Activated T-helper 2 cell treated with anti-CD3 and anti-CD28 coated beads, Interferon-gamma antibody, Interleukin-2, Interleukin-4, amounts not matched to agents 10 μg/mL and 5 μg/mL and 100 μg/mL, durations not matched to agents 14 hours and 24 hours and 36 hours (primary cell): ENCODE measurements at regions of chr1 and their contacts with region 1.

Region 1: GRCh38 chr1:116826818-116827606 is 72.8 kb downstream of the CD2 start:
- DNase-seq: peak; percentile 73
- H3K4me3 Mint-ChIP-seq: peak overlapping the region; percentile 71
- H3K27ac Mint-ChIP-seq: peak overlapping the region; percentile 97
- H3K4me1 Mint-ChIP-seq: peaks cover 64% of the 10 kb centered on the region
- H3K27me3 Mint-ChIP-seq: no peaks in the 10 kb centered on the region

Region 2: DNA sequence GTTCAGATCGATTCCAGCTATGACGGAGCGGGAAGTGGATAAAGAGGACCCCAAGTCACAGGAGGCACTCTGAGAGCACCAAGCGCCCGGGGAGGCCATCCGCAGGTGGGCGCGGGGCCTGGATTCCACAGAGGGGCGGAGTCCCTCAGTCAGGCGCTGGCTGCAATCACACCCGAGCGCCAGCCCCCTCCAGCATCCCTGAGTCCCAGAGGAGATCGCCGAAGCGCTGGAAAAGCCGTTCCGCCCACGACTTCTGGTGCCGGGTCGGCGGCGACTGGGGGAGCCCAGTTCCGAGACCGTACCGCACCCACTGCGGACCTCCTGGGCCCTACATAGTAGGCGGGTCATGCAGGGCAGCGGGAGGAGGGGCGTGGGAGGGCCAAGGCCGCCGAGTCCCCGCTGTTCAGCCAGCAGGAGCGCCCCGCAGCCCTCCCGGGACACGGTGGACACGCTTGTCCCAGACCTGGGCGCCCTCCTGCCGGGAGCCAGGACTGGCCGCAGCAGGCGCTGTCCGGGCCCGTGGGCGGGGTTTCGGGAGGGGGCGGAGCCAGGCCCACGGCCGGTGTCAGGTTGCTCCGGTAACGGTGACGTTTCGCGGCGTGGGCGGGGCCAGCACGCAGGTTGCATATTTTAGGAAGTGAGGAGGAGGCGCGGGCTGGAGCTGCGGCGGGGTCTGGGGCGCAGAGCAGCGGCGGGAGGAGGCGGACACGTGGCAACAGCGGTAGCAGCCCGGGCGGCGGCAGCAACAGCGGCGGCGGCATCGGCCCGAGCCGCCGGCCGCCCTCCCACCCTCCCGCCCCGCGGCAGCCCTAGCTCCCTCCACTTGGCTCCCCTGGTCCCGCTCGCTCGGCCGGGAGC is 454.2 kb before region 1 on chr1 and contains the start of gene ATP1A1:
- intact Hi-C with region 1: loop called (anchors 10 kb)
- DNase-seq: peak; percentile 95
- H3K4me3 Mint-ChIP-seq: peak within 1 kb of the TSS; percentile 95
- H3K27ac Mint-ChIP-seq: peak within 1 kb of the TSS; percentile 87
- H3K4me1 Mint-ChIP-seq: peaks cover 34% of the 10 kb centered on the region
- H3K27me3 Mint-ChIP-seq: peaks cover 28% of the 10 kb centered on the region
- total RNA-seq, gene ATP1A1: 196 and 200 TPM in 2 replicates

Region 3: GRCh38 chr1:116806245-116806644 is 20.8 kb before region 1 on chr1:
- intact Hi-C with region 1: loop called (anchors 2 kb)
- DNase-seq: peak; percentile 36
- H3K4me3 Mint-ChIP-seq: peak overlapping the region; percentile 79
- H3K27ac Mint-ChIP-seq: peak overlapping the region; percentile 90
- H3K4me1 Mint-ChIP-seq: peaks cover 84% of the 10 kb centered on the region
- H3K27me3 Mint-ChIP-seq: no peaks in the 10 kb centered on the region

Region 4: GRCh38 chr1:116873680-116874271 is 46.8 kb after region 1 on chr1:
- intact Hi-C with region 1: loop called (anchors 1 kb)
- DNase-seq: no peak
- H3K4me3 Mint-ChIP-seq: peak overlapping the region; percentile 17
- H3K27ac Mint-ChIP-seq: peak overlapping the region; percentile 36
- H3K4me1 Mint-ChIP-seq: peaks cover 25% of the 10 kb centered on the region
- H3K27me3 Mint-ChIP-seq: peaks cover 2% of the 10 kb centered on the region

Region 5: GRCh38 chr1:117001254-117001927 is 174.4 kb after region 1 on chr1 and contains the start of gene CD101:
- intact Hi-C with region 1: loop called (anchors 1 kb)
- DNase-seq: no peak
- H3K4me3 Mint-ChIP-seq: peak within 1 kb of the TSS; percentile 31
- H3K27ac Mint-ChIP-seq: peak within 1 kb of the TSS; percentile 46
- H3K4me1 Mint-ChIP-seq: peaks cover 37% of the 10 kb centered on the region
- H3K27me3 Mint-ChIP-seq: peaks cover 9% of the 10 kb centered on the region
- total RNA-seq, gene CD101: 0.18 and 0.25 TPM in 2 replicates